Activated B cell treated with CpG ODN at 0.5 μM for 24 hours (primary cell): ENCODE measurements at regions of chr2 and their contacts with region 1.

Region 1: GRCh38 chr2:218908721-218909619 is 28.3 kb downstream of the WNT10A start:
- DNase-seq: peak; percentile 82
- ATAC-seq: peak; percentile 98
- H3K4me3 Mint-ChIP-seq: peak overlapping the region; percentile 84
- H3K27ac Mint-ChIP-seq: peak overlapping the region; percentile 59
- H3K4me1 Mint-ChIP-seq: peaks cover 9% of the 10 kb centered on the region
- H3K27me3 Mint-ChIP-seq: peaks cover 12% of the 10 kb centered on the region
- CTCF ChIP-seq: no peak

Region 2: GRCh38 chr2:218421027-218421426 is 487.9 kb before region 1 on chr2:
- CTCF ChIA-PET with region 1: no interaction called
- POLR2A ChIA-PET with region 1: interaction called, 11 read pairs
- intact Hi-C with region 1: no loop called
- DNase-seq: no peak
- ATAC-seq: no peak
- H3K4me3 Mint-ChIP-seq: no peak overlapping the region
- H3K27ac Mint-ChIP-seq: no peak overlapping the region
- H3K4me1 Mint-ChIP-seq: no peaks in the 10 kb centered on the region
- H3K27me3 Mint-ChIP-seq: no peaks in the 10 kb centered on the region
- CTCF ChIP-seq: no peak

Region 3: GRCh38 chr2:218671654-218672566 is 237.1 kb before region 1 on chr2 and contains the starts of genes RNF25 and STK36:
- CTCF ChIA-PET with region 1: no interaction called
- POLR2A ChIA-PET with region 1: no interaction called
- intact Hi-C with region 1: loop called (anchors 2 kb)
- DNase-seq: peak; percentile 66
- ATAC-seq: peak; percentile 95
- H3K4me3 Mint-ChIP-seq: peak within 1 kb of the TSS; percentile 99
- H3K27ac Mint-ChIP-seq: peak within 1 kb of the TSS; percentile 97
- H3K4me1 Mint-ChIP-seq: peaks cover 21% of the 10 kb centered on the region
- H3K27me3 Mint-ChIP-seq: no peaks in the 10 kb centered on the region
- CTCF ChIP-seq: no peak
- total RNA-seq, gene RNF25: 29.7 and 35.1 TPM in 2 replicates
- total RNA-seq, gene STK36: 24.2 and 29.2 TPM in 2 replicates

Region 4: DNA sequence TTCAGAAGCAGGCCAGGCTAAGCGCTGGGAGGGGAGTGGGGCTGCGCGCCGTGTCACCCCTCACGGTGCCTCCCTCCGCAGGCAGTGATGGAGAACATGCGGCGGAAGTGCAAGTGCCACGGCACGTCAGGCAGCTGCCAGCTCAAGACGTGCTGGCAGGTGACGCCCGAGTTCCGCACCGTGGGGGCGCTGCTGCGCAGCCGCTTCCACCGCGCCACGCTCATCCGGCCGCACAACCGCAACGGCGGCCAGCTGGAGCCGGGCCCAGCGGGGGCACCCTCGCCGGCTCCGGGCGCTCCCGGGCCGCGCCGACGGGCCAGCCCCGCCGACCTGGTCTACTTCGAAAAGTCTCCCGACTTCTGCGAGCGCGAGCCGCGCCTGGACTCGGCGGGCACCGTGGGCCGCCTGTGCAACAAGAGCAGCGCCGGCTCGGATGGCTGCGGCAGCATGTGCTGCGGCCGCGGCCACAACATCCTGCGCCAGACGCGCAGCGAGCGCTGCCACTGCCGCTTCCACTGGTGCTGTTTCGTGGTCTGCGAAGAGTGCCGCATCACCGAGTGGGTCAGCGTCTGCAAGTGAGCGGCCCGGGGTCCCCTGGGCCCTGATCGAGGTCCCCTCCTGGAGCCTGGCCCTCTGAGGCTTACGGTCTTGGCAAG is 16.1 kb before region 1 on chr2:
- CTCF ChIA-PET with region 1: interaction called, 1,062 read pairs
- POLR2A ChIA-PET with region 1: interaction called, 7 read pairs
- intact Hi-C with region 1: loop called (anchors 1 kb)
- DNase-seq: peak; percentile 91
- ATAC-seq: peak; percentile 66
- H3K4me3 Mint-ChIP-seq: peak overlapping the region; percentile 80
- H3K27ac Mint-ChIP-seq: peak overlapping the region; percentile 92
- H3K4me1 Mint-ChIP-seq: peaks cover 59% of the 10 kb centered on the region
- H3K27me3 Mint-ChIP-seq: no peaks in the 10 kb centered on the region
- CTCF ChIP-seq: no peak

Region 5: DNA sequence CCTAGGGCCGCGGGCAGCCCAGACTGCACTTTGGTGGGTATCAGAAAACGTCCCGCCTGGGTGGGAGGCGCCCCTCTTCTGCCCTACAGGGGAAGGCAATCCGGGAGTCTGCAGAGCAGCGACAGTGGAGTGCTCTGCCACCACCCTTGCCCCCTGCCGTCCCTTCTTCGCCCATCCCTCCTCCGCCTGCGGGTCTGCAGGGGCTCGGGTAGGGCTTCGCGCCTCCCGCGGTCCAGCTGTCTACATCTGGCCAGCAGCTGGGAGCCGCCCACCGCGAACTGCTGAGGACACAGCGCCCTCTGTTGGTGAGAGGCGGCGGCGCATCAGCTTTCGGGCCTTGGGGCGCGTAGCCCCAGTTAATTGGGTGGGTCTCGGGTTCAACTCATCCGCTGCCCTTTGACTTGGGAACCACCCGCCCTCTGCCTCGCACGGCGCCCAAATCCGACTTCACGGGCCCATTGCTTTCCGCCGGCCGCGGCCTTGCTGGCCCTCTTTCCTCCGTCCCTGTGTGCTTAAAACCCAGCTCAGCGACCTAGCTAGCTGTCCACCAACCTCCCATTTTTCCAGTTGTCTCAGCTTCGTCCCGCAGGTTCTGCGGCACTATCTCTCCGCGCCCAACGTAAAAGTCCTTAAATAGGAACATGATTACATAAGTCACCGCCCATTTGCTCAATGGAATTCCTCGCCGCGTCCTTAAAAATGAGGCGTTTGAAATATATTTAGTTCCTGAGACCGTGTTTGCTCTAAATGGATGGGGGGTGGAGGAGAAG is 10.7 kb before region 1 on chr2:
- CTCF ChIA-PET with region 1: interaction called, 10 read pairs
- POLR2A ChIA-PET with region 1: interaction called, 7 read pairs
- intact Hi-C with region 1: loop called (anchors 1 kb)
- DNase-seq: peak; percentile 88
- ATAC-seq: peak; percentile 22
- H3K4me3 Mint-ChIP-seq: peak overlapping the region; percentile 85
- H3K27ac Mint-ChIP-seq: peak overlapping the region; percentile 84
- H3K4me1 Mint-ChIP-seq: peaks cover 47% of the 10 kb centered on the region
- H3K27me3 Mint-ChIP-seq: peaks cover 22% of the 10 kb centered on the region
- CTCF ChIP-seq: peak; percentile 97

Region 6: DNA sequence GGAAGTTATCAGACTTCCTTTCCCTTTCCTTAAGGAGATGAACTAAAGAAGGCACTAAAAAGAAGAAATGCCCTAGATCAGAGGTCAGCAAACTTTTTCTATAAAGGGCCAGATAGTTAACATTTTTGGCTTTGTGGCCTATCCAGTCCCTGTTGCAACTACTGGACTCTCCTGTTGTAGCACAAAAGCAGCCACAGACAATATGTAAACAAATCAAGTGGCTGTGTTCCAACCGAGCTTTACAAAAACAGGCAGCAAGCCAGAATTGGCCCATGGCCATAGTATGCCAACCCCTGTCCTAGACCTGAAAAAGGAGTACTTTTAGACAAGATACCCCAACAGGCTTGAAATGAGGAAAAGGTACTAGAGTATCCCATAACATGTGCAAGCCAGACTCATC is 240.7 kb after region 1 on chr2:
- CTCF ChIA-PET with region 1: no interaction called
- POLR2A ChIA-PET with region 1: no interaction called
- intact Hi-C with region 1: no loop called
- DNase-seq: no peak
- ATAC-seq: no peak
- H3K4me3 Mint-ChIP-seq: no peak overlapping the region
- H3K27ac Mint-ChIP-seq: no peak overlapping the region
- H3K4me1 Mint-ChIP-seq: no peaks in the 10 kb centered on the region
- H3K27me3 Mint-ChIP-seq: no peaks in the 10 kb centered on the region
- CTCF ChIP-seq: no peak

Region 7: DNA sequence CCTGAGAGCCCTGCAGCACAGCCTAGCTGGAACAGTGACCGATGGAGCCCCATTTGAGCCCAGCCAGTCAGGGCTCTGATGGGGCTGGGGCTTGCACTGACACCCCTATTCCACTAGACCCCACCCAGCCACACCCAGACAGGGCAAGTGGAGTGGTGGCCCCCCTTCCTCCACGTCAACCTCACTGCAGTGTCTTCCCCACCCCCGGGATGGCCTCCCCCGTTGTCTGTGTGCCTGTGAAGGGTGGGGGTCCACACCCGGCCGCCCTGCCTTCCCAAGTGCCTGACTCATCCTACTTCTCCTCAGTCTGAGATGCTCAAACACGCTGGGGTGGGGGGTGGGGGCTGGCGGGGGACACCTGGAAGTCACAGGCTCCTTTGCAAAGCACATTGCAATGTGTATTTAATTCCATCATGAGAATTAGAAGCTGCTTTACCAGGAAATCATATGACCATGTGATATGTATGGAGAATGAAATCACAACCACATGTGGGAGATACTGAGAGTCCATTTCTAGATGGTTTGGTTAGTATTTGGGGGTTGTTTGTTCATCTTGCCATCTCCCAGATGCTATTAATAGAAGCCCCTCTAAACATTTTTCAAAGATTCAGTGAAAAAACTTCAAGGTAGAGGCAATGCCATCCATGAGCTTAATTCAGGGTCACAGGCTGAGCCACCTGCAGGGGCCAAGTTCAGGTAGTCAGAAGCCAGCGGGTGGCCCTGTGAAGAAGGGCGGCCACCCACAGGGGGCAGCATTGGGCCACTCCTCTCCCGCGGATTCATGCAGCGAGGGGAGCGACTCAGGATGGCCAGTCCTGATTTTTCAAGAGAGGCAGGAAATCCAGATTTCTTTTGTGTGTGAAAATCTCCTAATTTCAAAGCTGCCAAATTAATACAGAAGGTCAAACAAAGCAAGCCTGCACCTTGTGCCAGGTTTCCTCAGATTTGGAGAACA is 567.0 kb after region 1 on chr2:
- CTCF ChIA-PET with region 1: no interaction called
- POLR2A ChIA-PET with region 1: no interaction called
- intact Hi-C with region 1: no loop called
- DNase-seq: no peak
- ATAC-seq: no peak
- H3K4me3 Mint-ChIP-seq: no peak overlapping the region
- H3K27ac Mint-ChIP-seq: no peak overlapping the region
- H3K4me1 Mint-ChIP-seq: peaks cover 2% of the 10 kb centered on the region
- H3K27me3 Mint-ChIP-seq: peaks cover 37% of the 10 kb centered on the region
- CTCF ChIP-seq: no peak